ENCODE measurements at regions of chr16 and their contacts with region 1.

Region 1: GRCh38 chr16:401468-402348 is at the start of gene DECR2:
- DNase-seq: peak; percentile 89 to 98 (median 95)
- ATAC-seq: peak; percentile 94
- H3K4me3 ChIP-seq: peak within 1 kb of the TSS; percentile 86
- H3K4me3 Mint-ChIP-seq: peak within 1 kb of the TSS; percentile 84 to 92 (median 89)
- H3K27ac ChIP-seq: peak within 1 kb of the TSS; percentile 82
- H3K27ac Mint-ChIP-seq: peak within 1 kb of the TSS; percentile 81 to 97 (median 94)
- H3K4me1 ChIP-seq: peaks cover 0 to 5% of the 10 kb centered on the region in 2 donors
- H3K4me1 Mint-ChIP-seq: peaks cover 10 to 21% (median 11%) of the 10 kb centered on the region in 7 donors
- H3K27me3 ChIP-seq: no peaks in the 10 kb centered on the region
- H3K27me3 Mint-ChIP-seq: peaks cover 0 to 1% (median 0%) of the 10 kb centered on the region in 5 donors
- total RNA-seq, gene DECR2: 7.9 to 13.8 (median 11.6) TPM

Region 2: DNA sequence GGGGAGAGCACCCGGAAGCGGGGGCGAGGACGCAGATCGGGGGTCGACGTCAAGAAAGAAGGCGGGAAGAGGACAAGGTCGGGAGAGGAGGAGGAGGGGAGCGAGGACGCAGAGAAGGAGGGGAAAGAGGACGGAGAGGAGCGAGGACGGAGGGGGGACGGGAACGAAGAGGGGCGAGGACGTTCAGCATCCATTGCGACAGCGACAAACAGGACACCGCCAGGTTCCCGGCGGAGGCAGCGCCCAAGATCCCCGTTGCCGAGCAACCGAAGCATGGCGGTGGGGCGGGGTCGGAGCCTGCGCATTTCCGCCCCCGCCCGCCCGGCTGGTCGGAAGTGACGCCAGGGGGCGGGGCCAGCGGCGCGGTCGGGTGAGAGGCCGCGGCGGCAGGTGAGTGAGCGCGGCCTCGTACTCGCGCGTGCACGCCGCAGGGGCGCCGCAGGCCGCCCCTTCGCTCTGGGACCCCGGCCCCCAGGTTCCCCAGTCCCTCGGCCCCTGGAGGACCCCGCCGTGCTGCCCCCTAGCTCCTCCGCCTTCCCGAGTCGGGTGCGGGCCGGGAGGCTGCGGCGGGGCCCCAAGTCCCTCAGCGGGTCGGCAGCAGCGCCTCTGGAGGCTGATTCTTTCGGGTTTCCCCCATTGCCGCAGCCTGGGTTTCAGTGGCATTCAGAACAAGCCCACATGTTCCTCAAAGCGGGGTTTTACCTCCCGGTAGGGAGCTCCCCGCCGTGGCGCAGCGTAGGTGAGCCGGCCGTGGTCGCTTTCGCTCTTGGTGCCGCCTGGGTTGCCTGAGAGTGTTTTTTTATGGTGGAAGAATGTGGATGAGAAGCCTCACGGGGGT is 167.0 kb before region 1 on chr16 and contains the start of gene FAM234A:
- CTCF ChIA-PET with region 1: no interaction called
- POLR2A ChIA-PET with region 1: interaction called, 3 read pairs
- intact Hi-C with region 1: loop called in 1 of 2 experiments (anchors 1 kb)
- DNase-seq: peak; percentile 93 to 98 (median 97)
- ATAC-seq: peak; percentile 90
- H3K4me3 ChIP-seq: peak within 1 kb of the TSS; percentile 82
- H3K4me3 Mint-ChIP-seq: peak within 1 kb of the TSS; percentile 81 to 99 (median 96)
- H3K27ac ChIP-seq: peak within 1 kb of the TSS; percentile 99
- H3K27ac Mint-ChIP-seq: peak within 1 kb of the TSS; percentile 90 to 100 (median 99)
- H3K4me1 ChIP-seq: peaks cover 0 to 5% of the 10 kb centered on the region in 2 donors
- H3K4me1 Mint-ChIP-seq: peaks cover 7 to 25% (median 16%) of the 10 kb centered on the region in 7 donors
- H3K27me3 ChIP-seq: no peaks in the 10 kb centered on the region
- H3K27me3 Mint-ChIP-seq: peaks cover 0 to 3% (median 0%) of the 10 kb centered on the region in 5 donors
- total RNA-seq, gene FAM234A: 30.4 to 43.9 (median 32.9) TPM

Region 3: DNA sequence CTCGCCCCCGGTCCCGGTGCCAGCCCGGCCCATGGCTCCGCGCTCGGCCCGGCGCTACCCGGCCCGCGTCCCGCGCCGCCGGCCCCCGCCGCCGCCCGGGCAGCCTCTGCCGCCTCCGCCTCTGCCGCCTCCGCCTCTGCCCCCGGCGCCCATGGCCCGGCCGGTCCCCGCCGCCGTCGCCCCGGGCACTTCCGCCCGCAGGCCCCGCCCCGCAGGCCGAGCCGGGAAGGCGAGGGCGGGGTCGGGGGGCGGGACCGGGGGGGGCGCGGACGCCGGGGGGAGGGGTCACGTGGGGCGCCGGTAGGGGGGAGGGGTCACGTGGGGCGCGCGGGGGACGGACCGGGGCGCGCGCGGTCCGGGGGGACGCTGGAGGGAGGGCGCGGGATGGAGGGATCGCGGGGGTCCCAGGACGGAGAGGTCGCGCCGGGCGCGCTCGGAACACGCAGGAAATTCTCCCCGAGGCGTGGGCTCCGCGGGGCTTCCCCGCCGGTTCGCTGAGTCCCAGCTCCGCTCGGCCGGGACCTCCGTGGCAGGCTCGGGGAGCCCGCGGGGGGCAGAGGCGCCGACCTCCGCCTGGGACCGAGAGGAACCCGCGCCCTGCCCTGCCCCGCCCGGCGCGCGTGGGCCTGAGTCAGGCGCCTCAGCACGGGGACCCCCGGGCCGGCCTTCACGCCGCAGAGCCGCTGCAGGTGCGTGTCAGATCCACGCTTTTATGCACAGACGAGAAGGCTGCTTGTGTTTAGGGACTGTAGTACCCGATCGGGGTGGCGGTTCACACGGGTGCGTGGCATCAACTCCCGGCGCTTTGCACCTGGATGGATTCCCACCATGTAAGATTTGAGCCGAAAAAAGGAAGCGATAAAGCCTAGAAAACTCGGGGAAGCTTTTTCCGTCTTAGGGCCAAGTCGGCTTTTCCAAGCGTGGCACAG is 19.7 kb before region 1 on chr16 and contains the start of gene PGAP6:
- CTCF ChIA-PET with region 1: interaction called, 3 read pairs
- POLR2A ChIA-PET with region 1: interaction called, 120 read pairs
- intact Hi-C with region 1: loop called (anchors 1 to 2 kb)
- DNase-seq: peak; percentile 36 to 83 (median 51)
- ATAC-seq: peak; percentile 83
- H3K4me3 ChIP-seq: peak within 1 kb of the TSS; percentile 79
- H3K4me3 Mint-ChIP-seq: peak within 1 kb of the TSS; percentile 85 to 97 (median 90)
- H3K27ac ChIP-seq: peak within 1 kb of the TSS; percentile 81
- H3K27ac Mint-ChIP-seq: peak within 1 kb of the TSS; percentile 58 to 98 (median 90)
- H3K4me1 ChIP-seq: peaks cover 18 to 23% of the 10 kb centered on the region in 2 donors
- H3K4me1 Mint-ChIP-seq: peaks cover 7 to 32% (median 21%) of the 10 kb centered on the region in 7 donors
- H3K27me3 ChIP-seq: no peaks in the 10 kb centered on the region
- H3K27me3 Mint-ChIP-seq: peaks cover 0 to 11% (median 0%) of the 10 kb centered on the region in 5 donors
- total RNA-seq, gene PGAP6: 32.2 to 107 (median 89.4) TPM

Region 4: DNA sequence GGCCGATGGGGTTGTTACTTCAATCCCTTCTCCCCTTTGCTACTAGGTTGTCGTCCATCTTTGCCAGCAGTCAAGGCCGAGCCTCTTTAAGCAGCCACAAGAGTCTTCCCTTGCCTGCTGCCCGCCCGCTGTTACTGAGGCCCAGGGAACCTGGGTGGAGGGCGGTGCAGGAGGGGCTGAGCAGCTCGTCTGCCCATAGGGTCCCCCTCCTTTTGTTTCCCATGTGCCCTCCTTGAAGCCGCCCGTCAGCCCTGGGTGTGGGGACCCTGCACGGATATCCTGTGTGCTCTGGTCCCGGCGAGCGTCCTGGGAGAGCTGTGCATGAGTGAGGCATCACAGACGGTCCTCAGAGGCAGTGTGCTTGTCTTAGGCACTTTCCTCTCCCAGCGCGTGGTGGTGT is 87.9 kb after region 1 on chr16:
- CTCF ChIA-PET with region 1: no interaction called
- POLR2A ChIA-PET with region 1: no interaction called
- intact Hi-C with region 1: loop called in 1 of 2 experiments (anchors 5 kb)
- DNase-seq: no peak
- ATAC-seq: no peak
- H3K4me3 ChIP-seq: no peak overlapping the region
- H3K4me3 Mint-ChIP-seq: no peak overlapping the region
- H3K27ac ChIP-seq: no peak overlapping the region
- H3K27ac Mint-ChIP-seq: no peak overlapping the region
- H3K4me1 ChIP-seq: no peaks in the 10 kb centered on the region
- H3K4me1 Mint-ChIP-seq: peaks cover 0 to 4% (median 0%) of the 10 kb centered on the region in 7 donors
- H3K27me3 ChIP-seq: no peaks in the 10 kb centered on the region
- H3K27me3 Mint-ChIP-seq: no peaks in the 10 kb centered on the region

Region 5: DNA sequence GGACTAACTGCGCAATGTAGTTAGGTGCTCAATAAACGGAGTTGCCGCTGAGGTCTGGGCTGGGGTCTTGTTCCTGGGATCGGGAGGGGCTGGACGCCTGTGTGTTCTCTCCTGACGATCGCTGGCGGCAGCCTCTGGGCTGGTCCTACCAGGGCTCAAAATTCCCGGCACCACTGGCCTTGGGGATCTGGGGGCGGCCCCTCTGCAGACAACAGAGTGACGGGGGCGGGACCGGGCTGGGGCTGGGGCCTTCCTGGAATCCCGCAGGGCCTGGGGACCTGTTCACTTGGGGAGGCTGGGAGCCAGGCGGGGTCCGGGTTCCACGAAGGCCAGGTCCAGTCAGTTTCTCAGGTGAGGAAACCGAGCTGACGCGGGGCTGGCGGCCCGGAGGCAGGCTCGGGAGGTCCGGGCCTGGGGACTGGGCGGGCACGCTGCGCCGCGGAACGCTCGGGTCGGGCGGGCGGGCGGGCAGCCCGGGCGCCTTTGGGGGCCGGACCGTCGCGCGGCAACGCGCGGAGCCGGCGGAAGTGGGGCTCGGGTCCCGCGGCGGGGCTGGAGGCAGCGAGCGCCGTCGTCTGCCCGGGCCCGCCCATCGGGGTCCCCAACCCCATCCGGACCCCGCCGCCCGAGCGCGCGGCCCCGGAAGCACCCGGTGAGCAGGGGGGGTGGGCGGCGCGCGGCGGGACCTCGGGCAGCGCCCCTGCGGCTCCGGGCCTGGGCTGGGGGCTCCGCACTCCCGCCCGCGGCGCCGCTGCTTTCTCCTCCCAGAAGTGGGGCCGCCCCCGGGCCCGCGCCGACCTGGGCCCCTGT is 167.9 kb after region 1 on chr16 and contains the start of gene PIGQ:
- CTCF ChIA-PET with region 1: no interaction called
- POLR2A ChIA-PET with region 1: no interaction called
- intact Hi-C with region 1: loop called in 1 of 2 experiments (anchors 5 kb)
- DNase-seq: peak; percentile 47 to 80 (median 62)
- ATAC-seq: peak; percentile 79
- H3K4me3 ChIP-seq: peak within 1 kb of the TSS; percentile 58
- H3K4me3 Mint-ChIP-seq: peak within 1 kb of the TSS; percentile 76 to 90 (median 85)
- H3K27ac ChIP-seq: peak within 1 kb of the TSS; percentile 89
- H3K27ac Mint-ChIP-seq: peak within 1 kb of the TSS; percentile 81 to 96 (median 89)
- H3K4me1 ChIP-seq: peaks cover 13 to 32% of the 10 kb centered on the region in 2 donors
- H3K4me1 Mint-ChIP-seq: peaks cover 15 to 39% (median 28%) of the 10 kb centered on the region in 7 donors
- H3K27me3 ChIP-seq: no peaks in the 10 kb centered on the region
- H3K27me3 Mint-ChIP-seq: no peaks in the 10 kb centered on the region
- total RNA-seq, gene PIGQ: 27.1 to 63.0 (median 45.1) TPM